AG04449 (cell line): ENCODE measurements at regions of chr2 and their contacts with region 1.

Region 1: DNA sequence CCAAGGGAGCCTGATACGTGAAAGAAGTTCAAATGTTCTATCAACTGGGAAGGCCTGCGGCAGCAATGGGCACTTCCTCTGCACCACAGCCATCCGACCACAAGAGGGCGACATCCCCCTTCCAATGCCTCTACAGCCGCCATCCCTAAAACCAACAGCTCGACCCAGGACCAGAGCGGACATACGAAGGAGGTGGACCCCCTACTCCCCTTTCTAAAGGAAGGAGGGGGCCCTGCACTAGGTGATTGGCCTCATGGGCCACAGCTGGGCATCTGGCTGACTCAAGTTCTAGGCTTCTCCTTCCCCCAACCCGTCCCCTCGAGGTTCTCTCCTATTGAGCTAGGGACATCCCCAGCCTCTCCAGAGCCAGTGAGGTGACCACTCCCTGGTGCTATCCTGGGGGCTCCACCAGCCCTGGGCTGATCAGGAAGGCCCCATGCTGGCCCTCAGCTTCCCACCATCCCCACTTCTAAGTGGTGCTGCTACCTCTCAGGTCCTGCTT is 217.2 kb downstream of the TNS1 start:
- DNase-seq: no peak
- H3K4me3 ChIP-seq: no peak overlapping the region
- CTCF ChIP-seq: peak; percentile 92

Region 2: DNA sequence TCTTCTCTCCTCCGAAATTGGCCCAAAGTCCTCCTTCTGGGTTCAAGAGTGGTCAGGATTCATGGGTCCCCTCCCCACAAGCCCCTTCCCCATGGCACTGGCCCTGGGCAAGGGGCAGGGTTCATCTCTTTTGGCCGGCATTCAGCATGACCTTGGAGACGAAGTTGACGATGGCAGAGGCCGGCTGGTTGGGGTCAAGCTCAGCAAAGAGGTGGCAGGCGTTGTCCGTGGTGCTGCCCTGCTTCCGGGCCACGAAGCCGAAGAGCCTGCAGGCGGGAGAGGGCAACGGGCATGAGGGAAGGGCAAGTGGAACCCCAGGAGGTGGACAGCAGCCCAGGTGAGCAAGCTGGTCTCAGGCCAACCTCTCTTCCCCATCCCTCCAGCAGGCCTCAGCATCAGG is 18.7 kb after region 1 on chr2:
- CTCF ChIA-PET with region 1: interaction called, 48 read pairs
- POLR2A ChIA-PET with region 1: no interaction called
- DNase-seq: no peak
- H3K4me3 ChIP-seq: no peak overlapping the region
- CTCF ChIP-seq: no peak

Region 3: GRCh38 chr2:217875138-217875537 is 89.5 kb after region 1 on chr2:
- CTCF ChIA-PET with region 1: interaction called, 32 read pairs
- POLR2A ChIA-PET with region 1: no interaction called
- DNase-seq: no peak
- H3K4me3 ChIP-seq: no peak overlapping the region
- CTCF ChIP-seq: no peak

Region 4: DNA sequence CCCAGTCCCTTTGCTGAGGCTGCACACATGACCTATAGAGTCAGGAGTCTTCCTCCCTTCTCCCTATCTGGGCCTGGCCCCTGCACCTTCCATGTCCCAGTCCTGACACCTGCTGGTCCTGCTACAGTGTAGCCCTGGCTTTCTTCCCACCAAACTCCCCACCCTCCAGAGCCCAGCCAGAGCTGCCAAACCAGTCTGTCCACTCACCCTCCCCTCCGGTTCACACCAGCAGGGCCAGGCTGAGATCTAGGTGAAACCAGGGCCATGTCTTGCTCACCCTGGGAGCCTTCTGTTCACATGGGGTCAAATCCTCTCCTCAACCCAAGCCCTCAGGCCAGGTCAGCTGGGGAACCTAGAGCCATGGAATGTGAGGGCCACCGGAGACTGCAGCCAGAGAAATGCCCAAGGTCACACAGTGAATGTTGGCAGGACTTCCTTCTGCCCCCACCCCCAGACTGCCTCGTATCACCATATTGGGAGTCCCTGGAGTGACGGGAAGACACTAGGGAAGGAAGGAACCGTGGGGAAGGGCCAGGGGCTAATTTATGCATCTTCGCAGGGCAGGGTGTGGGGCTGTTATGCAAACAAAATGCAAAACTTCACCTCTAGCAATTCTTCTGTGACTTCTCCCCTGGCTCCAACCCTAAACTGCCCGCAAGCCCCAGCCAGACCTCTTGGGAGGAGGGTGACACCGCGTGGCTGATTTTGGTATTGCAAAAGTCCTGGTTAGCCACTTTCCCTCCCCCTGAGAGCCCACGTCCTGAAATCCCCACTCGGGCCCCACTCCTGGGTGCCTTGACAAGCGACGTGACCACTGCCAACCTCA is 202.6 kb after region 1 on chr2:
- CTCF ChIA-PET with region 1: interaction called, 79 read pairs
- POLR2A ChIA-PET with region 1: no interaction called
- DNase-seq: no peak
- H3K4me3 ChIP-seq: no peak overlapping the region
- CTCF ChIP-seq: peak; percentile 87

Region 5: DNA sequence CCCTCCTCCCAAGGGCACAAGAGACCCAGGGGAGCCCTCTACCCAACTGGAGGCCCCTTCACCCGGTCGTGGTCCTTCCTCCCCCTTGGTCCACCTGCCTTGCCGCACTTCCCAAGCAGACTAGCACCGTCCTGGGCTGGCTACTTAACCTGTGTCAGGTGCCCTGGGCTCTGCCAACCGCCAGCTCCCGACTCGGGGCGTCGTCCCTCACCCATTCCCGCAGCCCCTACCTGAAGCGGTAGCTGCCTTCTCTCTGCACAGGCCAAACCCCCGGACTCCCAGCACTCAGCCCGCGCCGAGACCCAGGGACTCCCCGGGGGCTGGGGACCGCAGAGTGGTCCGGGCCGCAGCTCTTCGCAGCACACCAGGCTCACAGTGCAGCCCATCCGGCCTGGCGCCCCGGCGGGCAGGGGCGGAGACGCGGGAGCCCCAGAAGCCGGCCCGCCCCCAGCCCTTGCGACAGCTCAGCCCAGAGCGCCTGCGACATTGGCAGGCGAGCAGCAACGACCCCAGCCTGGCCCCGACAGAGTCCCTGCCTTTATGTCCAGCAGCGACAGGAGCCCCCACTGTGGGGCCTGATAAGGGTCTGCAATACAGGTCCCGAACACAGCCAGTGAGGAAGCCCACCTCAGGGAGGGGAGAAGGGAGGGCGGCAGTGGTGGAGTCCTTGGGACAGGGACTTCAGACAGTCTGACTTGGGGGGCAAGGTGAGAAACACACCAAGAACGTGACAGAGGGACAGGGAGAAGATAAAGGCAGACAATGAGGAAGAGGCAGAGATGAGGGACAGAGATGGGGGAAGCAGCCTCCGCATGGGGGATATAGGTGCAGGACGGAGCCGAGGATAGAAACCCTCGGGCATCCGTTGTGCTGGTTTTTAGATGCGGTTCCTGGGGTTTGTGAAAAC is 248.2 kb after region 1 on chr2:
- CTCF ChIA-PET with region 1: interaction called, 101 read pairs
- POLR2A ChIA-PET with region 1: no interaction called
- DNase-seq: no peak
- H3K4me3 ChIP-seq: no peak overlapping the region
- CTCF ChIP-seq: no peak

Region 6: GRCh38 chr2:218074031-218074430 is 288.4 kb after region 1 on chr2:
- CTCF ChIA-PET with region 1: interaction called, 64 read pairs
- POLR2A ChIA-PET with region 1: no interaction called
- DNase-seq: no peak
- H3K4me3 ChIP-seq: no peak overlapping the region
- CTCF ChIP-seq: peak; percentile 66